ENCODE measurements at regions of chr6 and their contacts with region 1.

Region 1: GRCh38 chr6:135951169-135951568 is 99.7 kb downstream of the PDE7B start:
- DNase-seq: no peak
- ATAC-seq: no peak
- H3K4me3 ChIP-seq: no peak overlapping the region
- H3K4me3 Mint-ChIP-seq: no peak overlapping the region
- H3K27ac ChIP-seq: no peak overlapping the region
- H3K27ac Mint-ChIP-seq: no peak overlapping the region
- H3K4me1 ChIP-seq: no peaks in the 10 kb centered on the region
- H3K4me1 Mint-ChIP-seq: no peaks in the 10 kb centered on the region
- H3K27me3 ChIP-seq: no peaks in the 10 kb centered on the region
- H3K27me3 Mint-ChIP-seq: no peaks in the 10 kb centered on the region
- CTCF ChIP-seq: no peak

Region 2: DNA sequence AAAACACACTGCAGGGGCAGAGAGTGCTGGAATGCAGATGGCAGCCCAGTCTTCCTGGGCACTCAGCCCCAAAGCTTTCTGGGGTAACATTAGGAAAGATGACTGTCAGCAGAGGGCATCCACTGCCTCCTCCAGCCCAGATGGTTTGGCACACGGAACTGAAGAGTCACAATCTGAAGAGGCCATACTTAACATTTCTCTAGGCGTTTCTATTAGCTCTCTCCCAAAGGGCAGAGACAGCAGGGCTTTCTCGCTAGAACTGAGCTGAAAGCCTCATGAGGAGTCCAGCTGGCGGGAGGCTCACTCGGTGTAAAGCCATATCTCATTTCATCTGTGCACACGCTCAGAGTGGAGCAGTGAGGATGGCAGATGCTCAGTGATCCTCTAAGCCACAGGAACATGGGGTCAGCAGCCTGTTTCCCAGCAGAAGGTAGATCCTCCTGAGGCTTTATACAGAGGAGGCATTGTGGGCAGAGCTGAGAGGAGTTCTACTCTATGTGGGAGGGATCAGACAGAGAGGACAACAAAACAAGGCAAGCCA is 1029.4 kb before region 1 on chr6:
- CTCF ChIA-PET with region 1: no interaction called
- POLR2A ChIA-PET with region 1: no interaction called
- intact Hi-C with region 1: no loop called
- DNase-seq: no peak
- ATAC-seq: no peak
- H3K4me3 ChIP-seq: no peak overlapping the region
- H3K4me3 Mint-ChIP-seq: no peak overlapping the region
- H3K27ac ChIP-seq: no peak overlapping the region
- H3K27ac Mint-ChIP-seq: no peak overlapping the region
- H3K4me1 ChIP-seq: no peaks in the 10 kb centered on the region
- H3K4me1 Mint-ChIP-seq: no peaks in the 10 kb centered on the region
- H3K27me3 ChIP-seq: no peaks in the 10 kb centered on the region
- H3K27me3 Mint-ChIP-seq: no peaks in the 10 kb centered on the region
- CTCF ChIP-seq: no peak

Region 3: DNA sequence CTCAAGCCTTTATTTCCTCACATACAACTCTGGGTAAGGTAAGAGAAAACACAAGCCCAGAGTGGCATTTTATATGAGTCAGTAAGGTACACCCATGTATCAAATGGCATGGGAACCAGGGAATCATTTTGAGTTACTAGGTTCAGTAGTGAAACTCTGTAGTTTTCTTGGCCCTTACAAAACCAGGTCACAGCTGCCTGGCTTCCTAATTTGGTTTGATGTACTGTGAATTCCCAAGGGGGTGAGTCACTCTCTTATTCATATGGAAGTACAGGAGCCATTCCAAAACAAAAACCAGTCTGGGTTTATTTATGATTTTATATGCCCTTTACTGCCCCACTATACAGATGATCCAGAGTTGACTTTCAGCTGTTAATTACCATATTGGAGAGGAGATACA is 29.0 kb before region 1 on chr6:
- CTCF ChIA-PET with region 1: no interaction called
- POLR2A ChIA-PET with region 1: no interaction called
- intact Hi-C with region 1: loop called in 1 of 2 experiments (anchors 1 kb)
- DNase-seq: no peak
- ATAC-seq: no peak
- H3K4me3 ChIP-seq: no peak overlapping the region
- H3K4me3 Mint-ChIP-seq: no peak overlapping the region
- H3K27ac ChIP-seq: no peak overlapping the region
- H3K27ac Mint-ChIP-seq: no peak overlapping the region
- H3K4me1 ChIP-seq: no peaks in the 10 kb centered on the region
- H3K4me1 Mint-ChIP-seq: no peaks in the 10 kb centered on the region
- H3K27me3 ChIP-seq: no peaks in the 10 kb centered on the region
- H3K27me3 Mint-ChIP-seq: peaks cover 3% of the 10 kb centered on the region
- CTCF ChIP-seq: no peak

Region 4: GRCh38 chr6:135962731-135963130 is 11.6 kb after region 1 on chr6:
- CTCF ChIA-PET with region 1: no interaction called
- POLR2A ChIA-PET with region 1: no interaction called
- intact Hi-C with region 1: loop called in 1 of 2 experiments (anchors 2 kb)
- DNase-seq: no peak
- ATAC-seq: no peak
- H3K4me3 ChIP-seq: no peak overlapping the region
- H3K4me3 Mint-ChIP-seq: no peak overlapping the region
- H3K27ac ChIP-seq: no peak overlapping the region
- H3K27ac Mint-ChIP-seq: no peak overlapping the region
- H3K4me1 ChIP-seq: no peaks in the 10 kb centered on the region
- H3K4me1 Mint-ChIP-seq: no peaks in the 10 kb centered on the region
- H3K27me3 ChIP-seq: no peaks in the 10 kb centered on the region
- H3K27me3 Mint-ChIP-seq: no peaks in the 10 kb centered on the region
- CTCF ChIP-seq: no peak

Measured in CD8-positive, alpha-beta T cell (primary cell).